ENCODE measurements at regions of chr5 and their contacts with region 1.

Region 1: GRCh38 chr5:90409318-90410177 is at the start of gene CETN3:
- DNase-seq: peak; percentile 95
- ATAC-seq: peak; percentile 92
- H3K4me3 ChIP-seq: peak within 1 kb of the TSS; percentile 93 to 100 (median 98)
- H3K4me3 Mint-ChIP-seq: no peak within 1 kb of the TSS
- H3K27ac ChIP-seq: peak within 1 kb of the TSS; percentile 91 to 94
- H3K27ac Mint-ChIP-seq: no peak within 1 kb of the TSS
- H3K4me1 ChIP-seq: peaks cover 11 to 12% of the 10 kb centered on the region in 2 donors
- H3K4me1 Mint-ChIP-seq: peaks cover 5% of the 10 kb centered on the region
- H3K27me3 ChIP-seq: no peaks in the 10 kb centered on the region
- H3K27me3 Mint-ChIP-seq: no peaks in the 10 kb centered on the region
- CTCF ChIP-seq: no peak
- total RNA-seq, gene CETN3: 17.0 and 18.0 TPM in 2 replicates

Region 2: GRCh38 chr5:90474235-90475109 is 64.9 kb after region 1 on chr5 and contains the starts of genes MBLAC2 and POLR3G:
- CTCF ChIA-PET with region 1: interaction called, 21 read pairs
- POLR2A ChIA-PET with region 1: interaction called, 13 read pairs
- intact Hi-C with region 1: loop called (anchors 1 kb)
- DNase-seq: peak; percentile 95
- ATAC-seq: peak; percentile 92
- H3K4me3 ChIP-seq: peak within 1 kb of the TSS; percentile 67 to 94 (median 86)
- H3K4me3 Mint-ChIP-seq: peak within 1 kb of the TSS; percentile 96
- H3K27ac ChIP-seq: peak within 1 kb of the TSS; percentile 53 to 55
- H3K27ac Mint-ChIP-seq: peak within 1 kb of the TSS; percentile 94
- H3K4me1 ChIP-seq: peaks cover 11 to 15% of the 10 kb centered on the region in 2 donors
- H3K4me1 Mint-ChIP-seq: peaks cover 24% of the 10 kb centered on the region
- H3K27me3 ChIP-seq: no peaks in the 10 kb centered on the region
- H3K27me3 Mint-ChIP-seq: no peaks in the 10 kb centered on the region
- CTCF ChIP-seq: peak; percentile 64
- total RNA-seq, gene MBLAC2: 11.5 and 13.3 TPM in 2 replicates
- total RNA-seq, gene POLR3G: 2.0 and 2.3 TPM in 2 replicates

Region 3: DNA sequence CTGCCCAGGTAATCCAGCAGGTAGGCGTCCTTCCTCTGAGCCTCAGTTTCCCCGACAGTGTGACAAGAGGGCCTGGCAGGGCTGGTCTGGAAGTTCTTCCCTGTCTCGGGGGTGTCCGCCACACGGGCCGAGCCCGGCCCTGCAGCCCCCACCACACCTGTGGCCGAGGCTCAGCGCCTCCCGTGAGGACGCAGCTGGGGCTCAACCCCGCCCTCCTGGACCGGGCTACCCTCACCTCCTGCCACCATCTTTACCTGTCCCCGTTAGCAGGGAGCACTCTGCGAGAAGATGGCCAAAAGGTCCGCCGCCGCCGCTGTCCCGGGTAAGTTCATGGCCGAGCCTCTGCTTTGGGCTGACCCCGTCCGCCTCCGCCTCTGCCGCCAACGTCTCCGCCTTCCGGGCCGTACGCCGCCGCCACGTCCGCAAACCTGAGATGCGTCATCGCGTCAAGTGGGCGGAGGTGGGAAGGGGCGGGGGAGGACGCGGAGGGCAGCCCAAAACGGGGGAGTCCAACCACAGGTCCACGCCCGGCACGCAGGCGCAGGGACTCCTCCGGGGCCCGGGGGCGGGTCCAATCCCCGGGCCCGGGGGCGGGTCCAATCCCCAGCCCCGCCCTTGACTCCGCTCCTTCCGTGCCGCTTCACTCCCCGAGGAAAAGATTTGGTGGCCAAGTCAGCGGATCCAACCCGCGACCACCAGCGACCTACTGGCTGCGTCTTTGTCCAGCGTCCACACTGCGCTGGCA is 119.8 kb after region 1 on chr5 and contains the start of gene LYSMD3:
- CTCF ChIA-PET with region 1: interaction called, 9 read pairs
- POLR2A ChIA-PET with region 1: interaction called, 12 read pairs
- intact Hi-C with region 1: loop called (anchors 1 kb)
- DNase-seq: peak; percentile 97
- ATAC-seq: peak; percentile 94
- H3K4me3 ChIP-seq: peak within 1 kb of the TSS; percentile 78 to 97 (median 83)
- H3K4me3 Mint-ChIP-seq: peak within 1 kb of the TSS; percentile 99
- H3K27ac ChIP-seq: peak within 1 kb of the TSS; percentile 88 to 94
- H3K27ac Mint-ChIP-seq: peak within 1 kb of the TSS; percentile 99
- H3K4me1 ChIP-seq: peaks cover 15 to 24% of the 10 kb centered on the region in 2 donors
- H3K4me1 Mint-ChIP-seq: peaks cover 36% of the 10 kb centered on the region
- H3K27me3 ChIP-seq: peaks cover 0 to 22% (median 15%) of the 10 kb centered on the region in 4 experiments
- H3K27me3 Mint-ChIP-seq: peaks cover 24% of the 10 kb centered on the region
- CTCF ChIP-seq: no peak
- total RNA-seq, gene LYSMD3: 23.7 and 25.2 TPM in 2 replicates

Region 4: GRCh38 chr5:91840412-91840811 is 1430.9 kb after region 1 on chr5:
- CTCF ChIA-PET with region 1: no interaction called
- POLR2A ChIA-PET with region 1: no interaction called
- intact Hi-C with region 1: no loop called
- DNase-seq: no peak
- ATAC-seq: no peak
- H3K4me3 ChIP-seq: no peak overlapping the region
- H3K4me3 Mint-ChIP-seq: no peak overlapping the region
- H3K27ac ChIP-seq: no peak overlapping the region
- H3K27ac Mint-ChIP-seq: no peak overlapping the region
- H3K4me1 ChIP-seq: no peaks in the 10 kb centered on the region
- H3K4me1 Mint-ChIP-seq: no peaks in the 10 kb centered on the region
- H3K27me3 ChIP-seq: no peaks in the 10 kb centered on the region
- H3K27me3 Mint-ChIP-seq: no peaks in the 10 kb centered on the region
- CTCF ChIP-seq: no peak

Measured in B cell (primary cell).